ENCODE measurements at regions of chr9 and their contacts with region 1.

Region 1: GRCh38 chr9:68685770-68686169 is 19.3 kb upstream of the PIP5K1B start:
- DNase-seq: no peak
- ATAC-seq: no peak

Region 2: DNA sequence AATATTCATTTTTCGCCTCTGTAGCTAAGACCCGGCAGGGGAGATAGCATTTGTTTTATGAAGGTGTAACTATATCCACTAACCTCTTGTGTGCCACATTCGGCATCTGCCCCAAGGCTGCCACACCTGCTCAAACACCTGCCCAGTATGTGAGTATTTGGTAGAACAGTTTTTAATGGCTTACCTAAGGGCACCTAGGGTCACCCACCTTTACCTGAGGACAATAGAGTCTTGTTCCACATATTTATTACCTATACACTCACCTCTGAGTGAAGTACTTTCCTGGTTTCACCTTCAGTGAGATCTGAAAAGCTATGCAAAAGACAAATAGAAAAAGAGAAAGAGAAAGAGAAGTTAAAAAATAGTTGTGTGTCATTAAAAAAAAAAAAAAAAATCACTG is 48.8 kb before region 1 on chr9:
- intact Hi-C with region 1: loop called (anchors 5 kb)
- DNase-seq: no peak
- ATAC-seq: no peak

Region 3: DNA sequence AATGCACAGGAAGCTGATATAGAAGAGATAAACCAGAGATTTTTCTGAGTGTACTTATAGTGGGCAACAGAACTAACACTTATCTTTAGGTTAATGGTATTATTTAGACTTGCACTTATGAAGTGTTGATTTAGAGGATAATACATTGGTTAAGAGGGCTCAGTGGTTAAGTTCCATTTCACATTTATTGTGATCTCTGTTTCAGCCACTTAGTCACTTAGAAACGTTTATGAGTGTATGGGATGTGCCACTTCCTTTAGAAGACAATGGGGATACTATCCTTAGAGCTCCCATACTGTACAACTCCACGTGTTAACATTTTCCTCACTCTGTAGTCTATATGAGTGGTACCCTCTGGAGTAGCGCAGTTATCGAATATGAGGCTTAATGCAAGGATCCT is 76.8 kb after region 1 on chr9:
- intact Hi-C with region 1: no loop called
- DNase-seq: no peak
- ATAC-seq: peak; percentile 36

Region 4: GRCh38 chr9:68999393-69000105 is 313.8 kb after region 1 on chr9:
- intact Hi-C with region 1: loop called (anchors 10 kb)
- DNase-seq: peak; percentile 50
- ATAC-seq: peak; percentile 90

Measured in Right ventricle myocardium superior (tissue), 1 donor.